CD8-positive, alpha-beta T cell (primary cell): ENCODE measurements at regions of chr2 and their contacts with region 1.

Region 1: GRCh38 chr2:181642086-181642485 is 14.8 kb downstream of the CERKL start:
- DNase-seq: no peak
- ATAC-seq: no peak
- H3K4me3 ChIP-seq: no peak overlapping the region
- H3K4me3 Mint-ChIP-seq: no peak overlapping the region
- H3K27ac ChIP-seq: no peak overlapping the region
- H3K27ac Mint-ChIP-seq: no peak overlapping the region
- H3K4me1 ChIP-seq: no peaks in the 10 kb centered on the region
- H3K4me1 Mint-ChIP-seq: no peaks in the 10 kb centered on the region
- H3K27me3 ChIP-seq: peaks cover 0 to 2% of the 10 kb centered on the region in 2 experiments
- H3K27me3 Mint-ChIP-seq: peaks cover 31% of the 10 kb centered on the region
- CTCF ChIP-seq: no peak

Region 2: DNA sequence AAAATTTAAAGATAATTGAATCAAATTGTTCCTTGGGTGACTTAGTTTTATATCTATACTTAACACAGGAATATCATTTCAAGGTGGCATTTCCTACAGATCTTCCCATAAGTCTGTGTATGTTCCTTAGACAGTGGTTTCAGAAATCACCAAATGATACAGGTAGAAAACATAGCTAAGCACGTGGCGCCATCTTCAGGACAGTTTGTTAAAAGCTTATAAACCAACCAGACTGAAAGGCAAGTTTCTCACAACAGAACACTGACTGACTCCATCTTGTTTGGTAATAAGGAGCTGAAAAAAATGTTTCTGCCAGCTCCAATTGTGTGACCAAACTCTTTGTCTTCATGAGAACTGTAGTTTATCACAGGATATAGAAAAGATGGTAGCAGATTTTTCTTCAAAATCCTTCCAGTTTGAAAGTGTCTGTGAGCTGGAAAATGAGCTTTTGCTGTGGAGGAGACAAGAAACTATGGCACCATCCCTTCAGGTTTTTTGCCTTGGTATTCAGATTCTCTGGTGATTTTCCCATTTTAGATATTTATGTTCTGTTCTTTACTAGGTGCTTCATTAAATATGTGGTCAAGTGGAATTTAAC is 73.0 kb after region 1 on chr2:
- CTCF ChIA-PET with region 1: no interaction called
- POLR2A ChIA-PET with region 1: no interaction called
- intact Hi-C with region 1: no loop called
- DNase-seq: peak; percentile 31 to 83 (median 71)
- ATAC-seq: peak; percentile 83
- H3K4me3 ChIP-seq: no peak overlapping the region
- H3K4me3 Mint-ChIP-seq: no peak overlapping the region
- H3K27ac ChIP-seq: no peak overlapping the region
- H3K27ac Mint-ChIP-seq: no peak overlapping the region
- H3K4me1 ChIP-seq: no peaks in the 10 kb centered on the region
- H3K4me1 Mint-ChIP-seq: no peaks in the 10 kb centered on the region
- H3K27me3 ChIP-seq: no peaks in the 10 kb centered on the region
- H3K27me3 Mint-ChIP-seq: peaks cover 2% of the 10 kb centered on the region
- CTCF ChIP-seq: peak; percentile 69

Region 3: GRCh38 chr2:182179176-182179575 is 537.1 kb after region 1 on chr2:
- CTCF ChIA-PET with region 1: no interaction called
- POLR2A ChIA-PET with region 1: no interaction called
- intact Hi-C with region 1: loop called in 1 of 2 experiments (anchors 5 kb)
- DNase-seq: no peak
- ATAC-seq: no peak
- H3K4me3 ChIP-seq: no peak overlapping the region
- H3K4me3 Mint-ChIP-seq: no peak overlapping the region
- H3K27ac ChIP-seq: no peak overlapping the region
- H3K27ac Mint-ChIP-seq: no peak overlapping the region
- H3K4me1 ChIP-seq: no peaks in the 10 kb centered on the region
- H3K4me1 Mint-ChIP-seq: no peaks in the 10 kb centered on the region
- H3K27me3 ChIP-seq: no peaks in the 10 kb centered on the region
- H3K27me3 Mint-ChIP-seq: peaks cover 3% of the 10 kb centered on the region
- CTCF ChIP-seq: no peak